ENCODE measurements at regions of chr7 and their contacts with region 1.

Region 1: GRCh38 chr7:55534175-55534915 is 38.0 kb downstream of the VOPP1 start:
- DNase-seq: peak; percentile 59 to 81
- H3K4me3 ChIP-seq: no peak overlapping the region
- H3K27ac ChIP-seq: peak overlapping the region; percentile 28 to 43
- H3K4me1 ChIP-seq: peaks cover 0 to 45% (median 10%) of the 10 kb centered on the region in 4 donors
- H3K27me3 ChIP-seq: no peaks in the 10 kb centered on the region
- CTCF ChIP-seq: no peak

Region 2: DNA sequence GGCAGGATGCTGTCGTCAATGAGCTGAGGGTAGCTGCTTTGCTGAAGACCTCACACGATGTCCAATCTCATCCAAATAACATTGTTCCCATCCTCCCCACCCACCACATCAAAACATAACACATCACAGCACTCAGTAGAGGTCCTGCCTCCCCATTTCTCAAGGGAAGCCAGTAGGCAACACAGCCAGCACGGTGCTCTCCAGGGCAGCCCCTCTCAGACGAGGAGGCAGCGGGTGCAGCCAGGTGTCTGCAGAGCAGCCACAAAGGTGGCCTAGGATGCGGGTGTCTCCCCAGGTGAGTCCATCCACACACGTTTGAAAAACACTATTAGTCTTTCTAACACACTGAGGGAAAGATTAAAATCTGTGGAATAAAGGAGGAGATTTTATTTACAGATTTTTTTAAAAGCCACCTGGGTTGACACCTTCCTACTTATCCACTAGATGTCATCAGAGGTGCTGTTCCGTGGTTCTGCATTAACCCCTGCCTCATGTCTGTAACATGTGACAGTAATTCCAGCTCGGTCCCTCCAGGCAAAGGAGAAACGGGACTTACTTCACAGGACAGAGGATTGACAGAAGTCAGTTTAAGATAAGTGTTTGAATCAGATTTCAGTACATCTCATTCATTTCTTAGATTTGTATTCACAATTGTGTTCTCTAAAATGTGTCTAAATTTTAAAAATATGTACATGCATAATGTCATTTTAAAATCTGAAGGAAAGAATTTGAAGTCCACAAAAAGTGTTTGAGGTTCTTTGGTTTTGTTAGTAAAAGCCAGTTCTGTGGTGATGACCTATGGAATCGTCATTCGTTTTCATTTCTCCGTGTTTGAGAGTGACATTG is 101.2 kb before region 1 on chr7:
- intact Hi-C with region 1: no loop called
- DNase-seq: no peak
- H3K4me3 ChIP-seq: no peak overlapping the region
- H3K27ac ChIP-seq: no peak overlapping the region
- H3K4me1 ChIP-seq: no peaks in the 10 kb centered on the region
- H3K27me3 ChIP-seq: no peaks in the 10 kb centered on the region
- CTCF ChIP-seq: no peak

Region 3: GRCh38 chr7:55554038-55554437 is 19.7 kb after region 1 on chr7:
- intact Hi-C with region 1: loop called (anchors 2 kb)
- DNase-seq: no peak
- H3K4me3 ChIP-seq: no peak overlapping the region
- H3K27ac ChIP-seq: no peak overlapping the region
- H3K4me1 ChIP-seq: peaks cover 0 to 22% (median 15%) of the 10 kb centered on the region in 4 donors
- H3K27me3 ChIP-seq: no peaks in the 10 kb centered on the region
- CTCF ChIP-seq: no peak

Measured in tibial artery (tissue), 4 donors.